Gastrocnemius medialis (tissue), 4 donors: ENCODE measurements at regions of chr10 and their contacts with region 1.

Region 1: GRCh38 chr10:63217120-63217605 is 84.0 kb downstream of the NRBF2 start:
- DNase-seq: no peak
- ATAC-seq: peak; percentile 78 to 90
- H3K4me3 ChIP-seq: no peak overlapping the region
- H3K27ac ChIP-seq: peak overlapping the region in 3 of 4 donors; percentile 10 to 24 (median 23)
- H3K4me1 ChIP-seq: peaks cover 0 to 26% of the 10 kb centered on the region in 2 donors
- H3K27me3 ChIP-seq: no peaks in the 10 kb centered on the region
- CTCF ChIP-seq: peak; percentile 62 to 79 (median 67)
- POLR2A ChIP-seq: no peak

Region 2: GRCh38 chr10:63021225-63021624 is 195.9 kb before region 1 on chr10:
- in situ Hi-C with region 1: no loop called
- intact Hi-C with region 1: no loop called
- DNase-seq: no peak
- ATAC-seq: no peak
- H3K4me3 ChIP-seq: no peak overlapping the region
- H3K27ac ChIP-seq: no peak overlapping the region
- H3K4me1 ChIP-seq: no peaks in the 10 kb centered on the region
- H3K27me3 ChIP-seq: no peaks in the 10 kb centered on the region
- CTCF ChIP-seq: no peak
- POLR2A ChIP-seq: no peak

Region 3: DNA sequence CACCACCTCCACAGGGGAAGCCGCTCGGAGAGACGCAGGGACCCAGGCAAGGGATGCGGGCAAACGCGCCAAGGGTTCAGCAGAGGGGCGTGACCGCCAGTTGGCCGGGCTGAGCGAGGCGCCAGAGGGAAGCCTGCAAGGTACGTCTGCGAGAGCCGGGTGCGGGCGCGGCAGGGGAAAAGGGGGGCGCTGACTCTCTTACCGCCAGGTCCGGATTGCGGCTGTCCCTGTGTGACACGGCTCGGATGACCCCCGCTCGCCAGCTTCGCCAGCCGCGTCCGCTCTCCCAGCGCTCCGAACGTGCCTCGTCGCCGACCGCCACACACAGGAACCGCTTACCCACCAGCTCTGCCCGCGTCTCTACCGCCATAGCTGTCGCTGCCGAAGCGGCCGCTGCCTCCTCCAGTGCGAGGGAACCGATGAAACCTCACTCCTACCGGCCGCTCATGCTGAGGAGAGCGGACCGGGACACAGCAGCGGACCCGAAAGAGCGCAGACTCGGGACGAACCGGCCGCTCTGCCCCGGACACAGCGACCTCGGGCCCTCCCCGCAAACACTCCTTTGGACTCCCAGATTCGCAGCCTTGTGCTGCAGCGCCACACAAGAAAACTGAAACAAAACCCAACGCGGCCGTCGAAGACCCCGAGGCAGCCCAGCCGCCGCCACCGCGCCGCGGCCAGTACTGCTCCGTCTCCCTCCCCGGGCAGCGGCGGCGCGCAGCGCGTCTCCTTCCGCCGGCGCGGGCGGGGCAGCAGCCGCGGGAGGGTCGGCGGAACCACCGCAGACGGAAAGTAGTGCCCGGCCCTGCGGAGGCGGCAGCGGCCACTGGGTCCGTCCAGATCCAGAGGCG is 248.4 kb after region 1 on chr10 and contains the start of gene JMJD1C:
- in situ Hi-C with region 1: loop called in 2 of 4 experiments (anchors 5 to 25 kb)
- intact Hi-C with region 1: loop called (anchors 1 kb)
- DNase-seq: peak; percentile 48 to 78
- ATAC-seq: peak; percentile 84 to 88
- H3K4me3 ChIP-seq: peak within 1 kb of the TSS; percentile 82 to 95 (median 92)
- H3K27ac ChIP-seq: peak within 1 kb of the TSS; percentile 93 to 95 (median 94)
- H3K4me1 ChIP-seq: peaks cover 26% of the 10 kb centered on the region in 2 donors
- H3K27me3 ChIP-seq: no peaks in the 10 kb centered on the region
- CTCF ChIP-seq: peak in 2 of 5 experiments; percentile 13 to 20
- POLR2A ChIP-seq: peak; percentile 79 to 82
- total RNA-seq, gene JMJD1C: 22.5 to 74.1 (median 46.9) TPM

Region 4: DNA sequence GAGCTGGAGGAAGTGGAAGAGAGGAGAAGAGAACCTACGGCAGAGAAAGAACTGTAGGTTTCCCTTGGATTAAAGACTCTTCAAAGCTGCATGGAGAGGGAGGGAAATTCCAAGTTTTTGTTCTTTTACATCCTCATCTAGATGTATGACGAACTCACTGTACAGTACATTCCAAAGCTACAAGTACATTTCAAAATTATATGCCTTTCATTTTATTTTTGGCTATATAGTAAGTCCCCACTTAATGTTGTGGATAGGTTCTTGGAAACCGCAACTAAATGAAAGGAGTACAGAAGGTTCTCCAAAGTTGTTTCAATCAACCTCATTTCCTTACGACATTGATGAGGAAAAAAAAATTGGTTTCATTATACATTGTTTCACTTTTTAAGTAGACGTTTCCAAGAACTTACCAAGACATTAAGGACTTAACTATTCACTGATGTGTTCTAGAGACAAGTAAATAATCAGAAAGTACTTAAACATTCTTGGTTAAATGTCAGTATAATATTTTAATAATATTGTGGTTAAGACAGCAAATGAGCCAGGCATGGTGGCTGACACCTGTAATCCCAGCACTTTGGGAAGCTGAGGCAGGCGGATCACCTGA is 264.8 kb after region 1 on chr10:
- in situ Hi-C with region 1: no loop called
- intact Hi-C with region 1: no loop called
- DNase-seq: no peak
- ATAC-seq: no peak
- H3K4me3 ChIP-seq: peak overlapping the region in 1 of 4 donors; percentile 3
- H3K27ac ChIP-seq: no peak overlapping the region
- H3K4me1 ChIP-seq: peaks cover 18 to 30% of the 10 kb centered on the region in 2 donors
- H3K27me3 ChIP-seq: no peaks in the 10 kb centered on the region
- CTCF ChIP-seq: no peak
- POLR2A ChIP-seq: no peak

Region 5: DNA sequence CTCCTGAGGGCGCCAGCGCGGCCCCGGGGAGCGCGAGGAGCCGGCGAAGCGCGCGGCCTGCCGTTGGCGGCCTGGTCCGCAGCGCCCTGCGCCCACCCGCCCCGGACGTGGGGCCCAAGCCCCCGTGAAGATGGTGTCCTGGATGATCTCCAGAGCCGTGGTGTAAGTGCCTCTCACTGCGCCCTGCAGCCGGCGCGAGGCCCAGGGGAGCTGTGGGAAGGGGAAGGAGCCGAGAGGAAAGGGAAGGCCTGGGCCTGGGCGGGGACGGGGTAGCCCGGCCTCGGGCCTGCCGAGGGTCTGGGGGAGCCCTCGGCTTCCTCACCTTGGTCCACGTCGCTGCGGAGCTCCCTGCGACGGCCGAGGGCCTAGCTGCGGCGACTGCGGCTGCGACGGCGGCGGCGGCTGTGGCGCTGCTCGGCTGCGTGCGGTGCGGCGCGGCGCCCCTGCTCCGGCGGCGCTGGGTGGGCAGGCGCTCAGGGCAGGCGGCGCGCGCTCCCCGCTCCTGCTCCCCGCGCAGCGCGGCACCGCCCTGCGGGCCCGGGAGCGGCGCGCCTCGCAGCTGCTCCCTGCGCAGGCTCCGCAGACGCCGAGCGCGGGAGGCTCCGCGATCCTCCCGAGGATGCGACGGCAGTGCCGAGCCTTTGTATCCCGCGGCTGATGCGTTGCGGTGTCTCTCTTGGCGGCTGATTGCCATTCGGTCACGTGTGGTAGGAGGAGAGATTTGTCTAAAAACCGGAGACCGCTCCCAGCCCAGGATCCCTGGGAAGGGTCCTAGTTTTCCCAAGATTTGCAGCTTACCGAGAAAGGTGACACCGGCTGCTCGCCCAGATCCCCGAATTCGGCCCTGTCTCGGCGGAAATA is 304.5 kb after region 1 on chr10:
- in situ Hi-C with region 1: no loop called
- intact Hi-C with region 1: loop called (anchors 5 kb)
- DNase-seq: peak; percentile 42 to 64
- ATAC-seq: peak; percentile 81 to 86
- H3K4me3 ChIP-seq: peak overlapping the region; percentile 73 to 88 (median 80)
- H3K27ac ChIP-seq: peak overlapping the region; percentile 95 to 98 (median 98)
- H3K4me1 ChIP-seq: peaks cover 51 to 52% of the 10 kb centered on the region in 2 donors
- H3K27me3 ChIP-seq: no peaks in the 10 kb centered on the region
- CTCF ChIP-seq: peak in 1 of 5 experiments; percentile 6
- POLR2A ChIP-seq: peak; percentile 77 to 81

Region 6: GRCh38 chr10:63720072-63720537 is 502.9 kb after region 1 on chr10:
- in situ Hi-C with region 1: loop called in 2 of 4 experiments (anchors 10 to 25 kb)
- intact Hi-C with region 1: loop called (anchors 2 kb)
- DNase-seq: no peak
- ATAC-seq: peak; percentile 27 to 32
- H3K4me3 ChIP-seq: peak overlapping the region in 1 of 4 donors; percentile 11
- H3K27ac ChIP-seq: peak overlapping the region in 3 of 4 donors; percentile 33 to 61 (median 37)
- H3K4me1 ChIP-seq: peaks cover 10 to 19% of the 10 kb centered on the region in 2 donors
- H3K27me3 ChIP-seq: no peaks in the 10 kb centered on the region
- CTCF ChIP-seq: peak; percentile 88 to 99 (median 94)
- POLR2A ChIP-seq: no peak